A673 (cell line): ENCODE measurements at regions of chr15 and their contacts with region 1.

Region 1: GRCh38 chr15:57235873-57236272 is 140.4 kb upstream of the CGNL1 start:
- DNase-seq: peak; percentile 86
- H3K4me3 ChIP-seq: peak overlapping the region; percentile 11
- H3K27ac ChIP-seq: peak overlapping the region; percentile 55
- H3K4me1 ChIP-seq: peaks cover 66% of the 10 kb centered on the region
- H3K27me3 ChIP-seq: no peaks in the 10 kb centered on the region
- CTCF ChIP-seq: no peak

Region 2: GRCh38 chr15:56653787-56654186 is 582.1 kb before region 1 on chr15:
- CTCF ChIA-PET with region 1: no interaction called
- POLR2A ChIA-PET with region 1: no interaction called
- intact Hi-C with region 1: no loop called
- DNase-seq: no peak
- H3K4me3 ChIP-seq: no peak overlapping the region
- H3K27ac ChIP-seq: no peak overlapping the region
- H3K4me1 ChIP-seq: no peaks in the 10 kb centered on the region
- H3K27me3 ChIP-seq: no peaks in the 10 kb centered on the region
- CTCF ChIP-seq: no peak

Region 3: GRCh38 chr15:56699743-56700142 is 536.1 kb before region 1 on chr15:
- CTCF ChIA-PET with region 1: no interaction called
- POLR2A ChIA-PET with region 1: no interaction called
- intact Hi-C with region 1: no loop called
- DNase-seq: no peak
- H3K4me3 ChIP-seq: no peak overlapping the region
- H3K27ac ChIP-seq: no peak overlapping the region
- H3K4me1 ChIP-seq: peaks cover 3% of the 10 kb centered on the region
- H3K27me3 ChIP-seq: no peaks in the 10 kb centered on the region
- CTCF ChIP-seq: no peak

Region 4: DNA sequence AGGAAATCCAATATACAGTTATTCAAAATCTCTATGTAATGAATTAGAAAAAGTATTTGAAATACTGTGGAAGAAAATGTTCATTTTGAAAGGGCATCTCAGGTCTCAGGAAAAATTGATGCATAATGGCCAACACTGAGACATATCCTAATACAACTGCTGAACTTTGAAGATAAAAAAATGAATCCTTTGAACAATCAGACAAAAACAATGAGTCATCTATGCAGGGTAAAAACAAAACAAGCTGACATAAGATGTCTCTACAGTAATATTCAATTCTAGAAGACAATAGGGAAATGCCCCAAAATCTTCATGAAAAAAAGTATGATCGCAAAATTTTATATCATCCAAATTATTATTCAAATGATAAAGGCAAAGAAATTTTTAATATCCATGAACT is 468.6 kb before region 1 on chr15:
- CTCF ChIA-PET with region 1: no interaction called
- POLR2A ChIA-PET with region 1: interaction called, 17 read pairs
- intact Hi-C with region 1: no loop called
- DNase-seq: no peak
- H3K4me3 ChIP-seq: no peak overlapping the region
- H3K27ac ChIP-seq: no peak overlapping the region
- H3K4me1 ChIP-seq: peaks cover 34% of the 10 kb centered on the region
- H3K27me3 ChIP-seq: no peaks in the 10 kb centered on the region
- CTCF ChIP-seq: no peak